ENCODE measurements at regions of chr6 and their contacts with region 1.

Region 1: DNA sequence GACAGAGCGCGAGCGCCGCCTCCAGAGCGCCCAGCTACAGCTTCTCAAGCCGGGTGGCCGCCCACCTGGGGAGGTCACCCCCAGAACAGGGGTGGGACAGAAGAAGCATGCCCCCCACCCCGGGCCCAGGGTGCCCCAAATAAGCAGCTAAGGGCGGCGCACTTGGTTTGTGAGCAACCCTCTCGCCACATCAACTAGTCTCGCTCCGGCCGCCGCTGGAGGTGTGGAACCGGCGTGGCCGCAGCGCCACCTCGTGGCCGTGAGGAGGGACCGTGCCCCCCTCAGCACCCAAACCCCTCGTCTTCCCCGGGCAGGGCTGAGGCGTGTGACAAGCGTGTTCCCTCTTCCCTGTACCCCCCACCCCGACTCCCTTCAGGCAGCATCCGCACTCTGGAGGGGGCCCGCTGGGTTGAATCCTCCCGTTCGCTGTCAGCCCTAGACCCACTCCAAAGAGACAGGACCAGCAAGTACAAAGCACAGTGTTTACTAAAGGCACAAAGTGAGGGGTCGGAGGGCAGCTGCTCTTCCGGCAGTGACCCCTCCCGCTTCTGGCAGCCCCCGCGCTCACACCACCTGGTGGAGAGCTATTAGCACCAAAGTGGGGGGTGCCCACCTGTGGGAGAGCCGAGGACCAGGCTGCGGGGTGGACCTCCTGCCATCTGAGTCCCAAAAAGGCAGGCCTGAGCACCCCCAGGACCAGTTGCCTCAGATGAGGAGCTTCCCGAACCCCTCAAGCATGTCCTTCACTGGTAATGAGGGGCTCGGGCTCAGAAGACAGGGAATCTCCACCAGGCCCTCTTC is 45.4 kb downstream of the MDFI start:
- DNase-seq: peak; percentile 90
- H3K4me3 ChIP-seq: peak overlapping the region; percentile 58 to 73
- H3K27ac ChIP-seq: peak overlapping the region; percentile 88 to 95
- H3K4me1 ChIP-seq: peaks cover 17% of the 10 kb centered on the region
- H3K27me3 ChIP-seq: no peaks in the 10 kb centered on the region
- CTCF ChIP-seq: peak; percentile 84 to 94 (median 88)
- POLR2A ChIP-seq: no peak

Region 2: DNA sequence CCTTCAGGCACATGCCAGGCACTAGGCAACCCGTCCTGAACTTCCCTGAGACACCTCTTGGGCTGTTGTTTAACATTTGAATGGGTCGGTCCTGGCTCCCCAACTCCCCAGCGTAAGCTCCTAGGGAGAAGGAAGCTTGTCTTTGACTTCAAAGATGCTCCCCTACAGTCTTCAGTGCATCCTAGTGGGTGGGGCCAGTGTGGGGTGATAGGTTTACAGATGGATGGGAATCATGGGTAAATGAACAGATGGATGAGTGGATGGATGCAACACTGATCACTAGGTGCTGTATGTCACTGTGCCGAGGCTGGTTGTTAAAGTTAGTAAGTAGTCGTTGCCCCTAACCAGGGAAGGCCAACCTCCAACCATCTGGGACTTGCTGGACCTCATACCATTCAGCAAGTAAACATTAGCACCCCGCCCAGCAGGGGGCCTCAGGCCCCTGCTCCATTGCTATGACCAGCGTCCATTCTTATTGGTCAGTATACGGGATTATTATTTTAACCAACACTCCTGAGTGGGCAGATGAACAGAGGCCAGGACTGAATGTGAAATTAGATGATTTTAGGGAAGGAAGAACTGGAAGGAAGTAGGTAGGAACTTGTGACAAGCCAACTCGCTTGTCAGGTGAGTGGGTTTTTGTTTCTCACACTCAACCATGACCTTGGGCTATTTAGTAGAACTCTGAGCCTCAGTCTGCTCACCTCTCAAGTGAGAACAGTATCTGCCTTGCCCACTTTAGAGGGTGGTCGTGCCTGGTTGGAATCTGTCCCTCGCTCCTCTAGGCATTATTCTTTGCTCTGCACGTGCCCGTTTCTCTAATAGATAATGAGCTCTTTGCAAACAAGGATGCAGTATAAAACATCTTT is 220.4 kb before region 1 on chr6:
- intact Hi-C with region 1: loop called (anchors 10 kb)
- DNase-seq: peak; percentile 75
- H3K4me3 ChIP-seq: no peak overlapping the region
- H3K27ac ChIP-seq: no peak overlapping the region
- H3K4me1 ChIP-seq: no peaks in the 10 kb centered on the region
- H3K27me3 ChIP-seq: no peaks in the 10 kb centered on the region
- CTCF ChIP-seq: peak; percentile 47 to 58 (median 51)
- POLR2A ChIP-seq: no peak

Region 3: DNA sequence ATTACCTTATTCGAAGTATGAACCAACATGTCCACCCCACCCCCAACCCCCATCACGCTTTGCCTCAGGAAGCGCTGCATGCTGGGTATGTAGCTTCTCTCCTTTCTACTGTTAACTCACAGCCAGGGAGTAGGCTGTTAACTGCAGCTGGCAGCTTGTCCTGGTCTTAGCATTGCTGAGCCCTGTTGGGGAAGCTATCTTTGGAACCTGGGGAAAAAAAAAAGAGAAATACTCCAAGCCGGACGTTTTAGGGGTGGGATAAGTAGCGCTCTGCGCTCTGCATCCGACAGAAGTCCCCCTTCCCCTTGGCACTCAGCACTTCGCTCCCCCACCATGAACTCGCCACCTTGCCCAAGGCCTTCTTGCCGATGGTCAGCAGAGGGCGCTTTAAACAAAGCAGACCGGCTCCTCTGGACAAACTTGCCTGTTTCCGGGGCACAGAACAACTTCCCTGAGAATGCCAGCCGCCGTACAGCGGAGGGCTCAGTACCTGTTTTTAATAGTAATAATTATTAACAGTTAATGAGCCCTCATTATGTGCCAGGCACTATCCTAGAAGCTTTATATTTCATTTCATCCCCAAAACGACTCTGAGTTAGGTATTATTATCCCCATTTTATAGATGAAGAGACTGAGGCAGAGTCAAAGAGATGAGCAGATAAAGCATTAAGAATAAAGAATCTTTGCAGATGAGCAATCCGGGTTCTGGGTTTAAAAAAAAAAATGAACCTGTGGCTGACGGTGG is 80.7 kb before region 1 on chr6:
- intact Hi-C with region 1: loop called (anchors 5 kb)
- DNase-seq: peak; percentile 84
- H3K4me3 ChIP-seq: no peak overlapping the region
- H3K27ac ChIP-seq: no peak overlapping the region
- H3K4me1 ChIP-seq: peaks cover 10% of the 10 kb centered on the region
- H3K27me3 ChIP-seq: no peaks in the 10 kb centered on the region
- CTCF ChIP-seq: peak; percentile 74 to 79 (median 78)
- POLR2A ChIP-seq: no peak

Measured in testis (tissue), 5 donors.